ENCODE measurements at regions of chr6 and their contacts with region 1.

Region 1: DNA sequence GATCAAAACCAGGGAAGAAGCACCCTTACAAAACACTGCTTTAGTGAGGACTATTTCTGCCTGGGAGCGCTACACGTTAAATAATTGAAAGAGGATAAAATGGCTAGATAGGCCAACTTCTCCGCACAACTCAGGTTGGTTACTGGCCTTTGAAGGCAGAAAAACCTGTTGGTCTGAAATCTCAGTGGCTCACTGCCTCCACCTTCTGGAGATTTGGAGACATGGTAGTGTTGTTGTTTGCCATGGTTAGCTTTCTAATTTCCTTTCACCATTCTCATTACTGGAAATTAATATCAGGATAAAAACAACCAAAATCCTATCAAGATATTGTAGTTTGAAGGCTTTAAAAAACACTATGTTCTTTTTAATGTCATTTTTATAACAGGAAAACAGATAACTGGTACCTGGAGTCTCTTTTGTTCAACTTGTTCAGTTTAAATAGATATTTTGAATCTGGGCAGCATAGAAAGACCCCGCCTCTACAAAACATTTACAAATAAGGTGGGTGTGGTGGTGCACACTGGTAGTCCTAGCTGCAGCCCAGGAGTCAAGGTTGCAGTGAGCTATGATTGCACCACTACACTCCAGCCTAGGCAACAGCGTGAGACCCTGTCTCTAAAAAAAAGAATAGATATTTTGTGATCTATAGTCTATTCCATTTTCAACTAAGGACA is 27.5 kb upstream of the BCLAF1 start:
- DNase-seq: peak; percentile 60
- ATAC-seq: peak; percentile 97
- H3K4me3 Mint-ChIP-seq: no peak overlapping the region
- H3K27ac Mint-ChIP-seq: no peak overlapping the region
- H3K4me1 Mint-ChIP-seq: no peaks in the 10 kb centered on the region
- H3K27me3 Mint-ChIP-seq: no peaks in the 10 kb centered on the region; the same call in 1 of the 2 replicates
- CTCF ChIP-seq: peak; percentile 40

Region 2: DNA sequence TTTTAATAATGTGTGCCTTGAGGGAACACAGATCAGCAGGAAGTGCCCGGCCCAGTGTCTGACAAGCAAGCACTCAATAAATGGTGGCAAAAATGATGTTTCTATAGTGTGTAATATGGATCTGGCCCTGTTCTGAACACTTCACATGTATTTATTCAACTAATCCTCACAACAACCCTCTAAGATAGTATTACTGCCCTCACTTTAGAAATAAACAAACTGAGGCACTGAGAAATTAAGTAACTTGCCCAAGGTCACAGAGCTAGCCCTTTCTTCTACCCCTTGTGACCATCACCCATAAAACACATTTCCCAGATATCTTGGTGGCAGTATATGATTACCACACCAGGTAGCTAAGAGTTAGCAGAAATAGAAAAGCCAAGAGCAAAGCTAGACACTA is 54.2 kb before region 1 on chr6:
- CTCF ChIA-PET with region 1: no interaction called
- POLR2A ChIA-PET with region 1: no interaction called
- DNase-seq: no peak
- ATAC-seq: no peak
- H3K4me3 Mint-ChIP-seq: no peak overlapping the region
- H3K27ac Mint-ChIP-seq: no peak overlapping the region
- H3K4me1 Mint-ChIP-seq: no peaks in the 10 kb centered on the region
- H3K27me3 Mint-ChIP-seq: no peaks in the 10 kb centered on the region
- CTCF ChIP-seq: no peak

Region 3: DNA sequence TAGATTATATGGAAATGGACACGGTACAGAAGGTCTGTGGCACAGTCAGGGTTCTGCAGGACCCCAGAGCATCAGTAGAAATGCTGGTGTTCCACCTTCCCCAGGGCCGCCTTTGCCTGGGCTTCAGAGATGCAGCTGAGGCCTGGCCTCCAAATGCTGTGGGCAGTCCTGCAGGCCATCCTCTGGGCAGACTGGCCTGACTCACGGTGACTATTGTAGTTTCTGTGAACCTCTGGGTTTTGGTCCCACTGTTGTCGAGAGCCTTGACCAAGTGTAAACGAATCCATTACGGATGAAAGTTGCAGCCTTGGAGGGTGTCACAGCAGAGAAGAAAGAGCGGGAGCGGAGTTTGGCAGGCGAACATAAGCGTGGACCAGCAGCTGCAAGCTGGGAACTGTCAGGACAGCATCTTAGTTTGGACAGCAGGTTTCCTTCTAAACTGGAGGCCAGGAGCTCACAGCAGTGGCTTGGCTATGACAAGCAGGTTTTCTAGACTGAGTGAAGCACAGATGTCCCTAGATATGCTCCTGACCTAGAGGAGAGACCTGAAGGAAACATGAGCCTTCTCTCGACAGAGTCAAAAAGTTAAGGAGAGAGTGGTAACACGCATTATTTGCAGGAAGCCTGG is 18.7 kb after region 1 on chr6:
- CTCF ChIA-PET with region 1: interaction called, 12 read pairs
- POLR2A ChIA-PET with region 1: no interaction called
- DNase-seq: no peak
- ATAC-seq: no peak
- H3K4me3 Mint-ChIP-seq: no peak overlapping the region
- H3K27ac Mint-ChIP-seq: peak overlapping the region; percentile 41; the same call in 1 of the 2 replicates
- H3K4me1 Mint-ChIP-seq: peaks cover 18% of the 10 kb centered on the region; the same call in 1 of the 2 replicates
- H3K27me3 Mint-ChIP-seq: no peaks in the 10 kb centered on the region
- CTCF ChIP-seq: no peak

Measured in WTC11 (cell line).